OCI-LY7 (cell line): ENCODE measurements at regions of chr10 and their contacts with region 1.

Region 1: GRCh38 chr10:96271016-96271829 is at the start of gene BLNK:
- DNase-seq: peak; percentile 89
- H3K4me3 ChIP-seq: peak within 1 kb of the TSS; percentile 90
- H3K27ac ChIP-seq: peak within 1 kb of the TSS; percentile 100
- H3K4me1 ChIP-seq: peaks cover 58% of the 10 kb centered on the region
- CTCF ChIP-seq: no peak
- total RNA-seq, gene BLNK: 78.0 and 113 TPM in 2 replicates

Region 2: DNA sequence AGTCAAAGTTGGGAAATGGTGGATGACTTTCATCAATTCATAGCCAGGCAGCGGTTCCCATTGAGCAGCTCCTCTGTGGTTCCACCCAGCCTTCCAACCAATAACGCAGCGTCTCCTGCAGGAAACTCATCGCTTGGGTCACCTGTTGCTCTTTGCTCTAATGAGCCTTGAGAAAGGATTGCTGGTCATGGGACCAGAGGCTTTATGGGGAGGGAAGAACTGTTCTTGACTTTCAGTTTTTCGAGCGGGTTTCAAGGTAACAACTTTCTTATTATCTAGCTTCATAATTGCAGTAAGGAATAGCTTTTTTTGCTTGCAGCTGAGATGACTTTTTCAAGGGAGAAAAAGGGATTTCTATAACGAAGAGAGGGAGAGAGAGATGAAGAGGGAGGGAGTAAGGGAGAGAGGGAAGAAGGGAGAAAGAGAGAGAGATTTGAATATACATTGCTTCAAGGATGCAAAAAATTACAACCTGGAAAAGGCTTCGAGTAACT is 515.7 kb before region 1 on chr10:
- CTCF ChIA-PET with region 1: no interaction called
- POLR2A ChIA-PET with region 1: no interaction called
- intact Hi-C with region 1: loop called (anchors 5 kb)
- DNase-seq: no peak
- H3K4me3 ChIP-seq: peak overlapping the region; percentile 62
- H3K27ac ChIP-seq: peak overlapping the region; percentile 94
- H3K4me1 ChIP-seq: peaks cover 48% of the 10 kb centered on the region
- CTCF ChIP-seq: no peak

Region 3: GRCh38 chr10:95832216-95833041 is 438.8 kb before region 1 on chr10:
- CTCF ChIA-PET with region 1: no interaction called
- POLR2A ChIA-PET with region 1: no interaction called
- intact Hi-C with region 1: no loop called
- DNase-seq: peak; percentile 17
- H3K4me3 ChIP-seq: no peak overlapping the region
- H3K27ac ChIP-seq: no peak overlapping the region
- H3K4me1 ChIP-seq: peaks cover 21% of the 10 kb centered on the region
- CTCF ChIP-seq: no peak

Region 4: DNA sequence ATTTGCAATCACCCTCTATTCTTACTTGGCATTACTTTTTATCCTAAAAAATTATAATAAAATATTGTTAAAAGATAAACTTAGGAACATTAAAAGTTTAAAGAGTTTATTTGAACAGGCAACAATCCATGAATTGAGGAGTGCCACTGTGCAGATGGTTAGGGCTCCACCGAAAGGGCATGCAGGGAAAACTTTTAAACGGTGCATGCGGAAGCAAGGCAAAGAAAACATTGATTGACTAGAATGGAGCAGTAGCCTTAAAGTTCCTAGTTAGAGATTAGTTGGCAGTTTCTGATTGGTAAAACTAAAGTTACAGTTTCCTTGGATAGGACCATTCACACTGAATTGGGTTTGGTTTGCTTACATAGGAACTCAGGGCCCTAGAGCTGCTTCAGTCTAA is 346.2 kb before region 1 on chr10:
- CTCF ChIA-PET with region 1: no interaction called
- POLR2A ChIA-PET with region 1: no interaction called
- intact Hi-C with region 1: no loop called
- DNase-seq: no peak
- H3K4me3 ChIP-seq: no peak overlapping the region
- H3K27ac ChIP-seq: no peak overlapping the region
- H3K4me1 ChIP-seq: no peaks in the 10 kb centered on the region
- CTCF ChIP-seq: no peak

Region 5: DNA sequence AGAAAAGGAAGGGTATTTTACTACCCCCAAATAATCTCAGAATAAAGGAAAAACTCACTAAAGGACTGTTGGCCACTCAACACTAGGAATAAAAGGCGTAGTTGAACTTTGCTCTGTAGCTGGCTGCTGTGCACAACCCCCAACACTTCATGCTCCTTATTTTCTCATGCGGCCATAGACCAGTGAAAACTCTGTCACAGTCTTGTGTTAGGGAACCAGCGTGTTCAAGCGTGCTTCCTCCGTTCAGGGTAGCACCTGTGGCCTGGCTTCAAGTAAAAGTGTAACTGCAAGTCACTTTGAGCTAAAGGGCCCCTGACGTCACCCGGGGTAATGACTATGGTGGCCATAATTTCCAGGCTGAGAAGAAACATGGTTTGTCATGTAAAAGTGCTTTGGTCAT is 26.9 kb before region 1 on chr10:
- CTCF ChIA-PET with region 1: no interaction called
- POLR2A ChIA-PET with region 1: interaction called, 26 read pairs
- intact Hi-C with region 1: loop called (anchors 1 kb)
- DNase-seq: peak; percentile 97
- H3K4me3 ChIP-seq: peak overlapping the region; percentile 52
- H3K27ac ChIP-seq: peak overlapping the region; percentile 93
- H3K4me1 ChIP-seq: peaks cover 50% of the 10 kb centered on the region
- CTCF ChIP-seq: no peak

Region 6: GRCh38 chr10:96287392-96288105 is 16.3 kb after region 1 on chr10:
- CTCF ChIA-PET with region 1: interaction called, 7 read pairs
- POLR2A ChIA-PET with region 1: interaction called, 176 read pairs
- intact Hi-C with region 1: loop called (anchors 1 kb)
- DNase-seq: peak; percentile 96
- H3K4me3 ChIP-seq: peak overlapping the region; percentile 63
- H3K27ac ChIP-seq: peak overlapping the region; percentile 98
- H3K4me1 ChIP-seq: peaks cover 90% of the 10 kb centered on the region
- CTCF ChIP-seq: no peak

Region 7: DNA sequence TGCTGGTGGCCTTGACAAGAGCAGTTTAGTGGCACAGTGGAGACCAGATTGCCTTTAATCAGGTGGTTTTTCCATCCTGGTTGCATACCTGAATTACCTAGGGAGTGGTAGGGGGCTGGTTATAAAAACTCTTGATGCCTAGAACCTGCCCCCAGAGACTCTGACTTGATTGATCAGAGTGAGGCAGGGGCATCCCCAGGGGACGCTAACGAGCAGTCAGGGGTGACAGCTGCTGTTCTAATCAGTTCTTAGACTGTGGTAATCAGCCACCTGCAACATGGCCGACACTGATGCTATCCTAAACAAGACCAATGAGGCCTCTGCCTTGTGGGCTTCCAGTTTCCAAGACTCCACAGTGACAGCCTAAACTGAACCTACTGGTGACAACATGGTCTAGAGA is 89.5 kb after region 1 on chr10:
- CTCF ChIA-PET with region 1: no interaction called
- POLR2A ChIA-PET with region 1: no interaction called
- intact Hi-C with region 1: no loop called
- DNase-seq: no peak
- H3K4me3 ChIP-seq: no peak overlapping the region
- H3K27ac ChIP-seq: no peak overlapping the region
- H3K4me1 ChIP-seq: no peaks in the 10 kb centered on the region
- CTCF ChIP-seq: no peak

Region 8: DNA sequence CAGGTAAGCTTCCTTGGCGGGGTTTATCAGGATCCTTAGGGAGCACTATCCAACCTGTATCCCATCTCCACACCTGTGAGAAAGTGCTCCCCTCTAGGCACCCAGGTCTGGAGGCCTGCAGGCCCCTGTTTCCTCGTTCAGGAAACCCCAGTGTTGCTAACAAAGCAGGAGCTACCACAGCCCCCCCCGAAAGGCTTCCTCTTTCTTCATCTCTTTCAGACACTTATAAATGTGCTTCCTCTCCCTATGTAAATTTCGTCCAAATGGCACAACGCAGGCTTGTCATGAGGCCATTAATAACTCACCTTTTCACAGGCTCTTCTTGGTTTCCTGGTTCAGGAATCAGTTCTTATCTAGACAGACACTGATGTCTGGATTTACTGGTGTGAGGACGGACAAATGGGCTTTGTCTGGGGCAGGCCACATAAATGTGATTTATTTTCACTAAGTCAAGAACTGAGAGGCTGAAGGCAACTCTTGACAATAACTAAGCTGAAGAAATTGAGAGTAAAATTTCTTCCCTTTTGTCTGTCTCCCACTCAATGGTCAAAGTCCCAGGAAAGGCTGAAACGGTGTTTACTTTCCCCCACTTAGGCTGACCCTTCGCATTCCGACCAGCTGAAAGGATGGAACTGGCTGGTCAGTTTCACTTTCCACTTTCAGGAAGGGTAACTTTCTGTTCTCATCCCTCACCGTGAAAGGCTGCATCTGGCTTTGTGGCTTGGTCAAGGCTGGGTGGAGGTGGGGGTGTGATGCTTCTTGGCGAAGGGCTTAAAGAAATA is 402.3 kb after region 1 on chr10:
- CTCF ChIA-PET with region 1: no interaction called
- POLR2A ChIA-PET with region 1: no interaction called
- intact Hi-C with region 1: loop called (anchors 10 kb)
- DNase-seq: peak; percentile 87
- H3K4me3 ChIP-seq: peak overlapping the region; percentile 62
- H3K27ac ChIP-seq: peak overlapping the region; percentile 96
- H3K4me1 ChIP-seq: peaks cover 88% of the 10 kb centered on the region
- CTCF ChIP-seq: no peak